Lower leg skin (tissue), 4 donors: ENCODE measurements at regions of chr15 and their contacts with region 1.

Region 1: DNA sequence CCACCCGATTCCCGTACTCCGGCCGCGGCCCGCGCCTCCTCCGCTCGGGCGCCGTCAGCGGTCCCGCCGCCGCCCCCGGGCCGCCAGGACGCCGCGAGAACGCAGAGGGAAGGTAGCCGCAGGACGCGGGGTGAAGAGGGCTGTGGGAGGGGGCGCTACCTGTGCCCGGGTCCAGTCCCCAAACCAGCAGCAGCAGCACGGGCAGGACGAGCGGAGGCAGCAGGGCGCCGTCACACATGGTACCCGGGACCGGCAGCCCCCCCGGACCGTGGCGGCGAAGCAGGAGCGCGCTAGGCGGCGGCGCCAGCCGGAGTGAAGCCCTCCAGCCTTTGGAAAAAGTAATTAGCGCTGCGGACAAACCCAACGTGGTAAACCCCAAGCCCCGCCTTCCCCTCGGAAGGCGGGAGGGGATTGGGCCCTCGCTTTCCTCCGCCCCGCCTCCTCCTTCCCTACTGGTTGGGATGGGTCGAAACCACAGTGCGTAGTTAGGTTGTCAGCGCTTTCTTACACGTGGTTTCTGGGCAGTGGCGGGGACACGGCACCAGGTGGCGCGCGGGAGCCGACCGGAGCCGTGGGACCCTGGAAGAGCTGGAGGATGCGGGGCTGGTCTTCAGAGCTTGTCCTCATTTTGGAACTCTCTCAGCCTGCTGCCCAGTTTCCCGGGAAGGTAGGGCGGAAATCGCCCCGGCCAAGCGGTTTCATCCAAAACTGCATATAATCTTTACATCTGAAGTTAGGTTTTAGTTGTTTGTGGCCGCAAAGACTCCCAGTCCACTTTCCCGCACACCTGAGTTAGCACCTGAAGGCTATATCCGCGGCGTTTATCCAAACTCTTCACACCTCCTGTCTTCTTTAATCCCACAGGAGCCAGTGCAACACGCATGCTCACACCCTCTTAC is at the start of gene ADAMTS17:
- DNase-seq: peak; percentile 97 to 99
- H3K4me3 ChIP-seq: peak within 1 kb of the TSS; percentile 55
- CTCF ChIP-seq: peak in 1 of 3 donors; percentile 86
- POLR2A ChIP-seq: no peak
- total RNA-seq, gene ADAMTS17: 3.5 to 7.8 (median 3.9) TPM

Region 2: DNA sequence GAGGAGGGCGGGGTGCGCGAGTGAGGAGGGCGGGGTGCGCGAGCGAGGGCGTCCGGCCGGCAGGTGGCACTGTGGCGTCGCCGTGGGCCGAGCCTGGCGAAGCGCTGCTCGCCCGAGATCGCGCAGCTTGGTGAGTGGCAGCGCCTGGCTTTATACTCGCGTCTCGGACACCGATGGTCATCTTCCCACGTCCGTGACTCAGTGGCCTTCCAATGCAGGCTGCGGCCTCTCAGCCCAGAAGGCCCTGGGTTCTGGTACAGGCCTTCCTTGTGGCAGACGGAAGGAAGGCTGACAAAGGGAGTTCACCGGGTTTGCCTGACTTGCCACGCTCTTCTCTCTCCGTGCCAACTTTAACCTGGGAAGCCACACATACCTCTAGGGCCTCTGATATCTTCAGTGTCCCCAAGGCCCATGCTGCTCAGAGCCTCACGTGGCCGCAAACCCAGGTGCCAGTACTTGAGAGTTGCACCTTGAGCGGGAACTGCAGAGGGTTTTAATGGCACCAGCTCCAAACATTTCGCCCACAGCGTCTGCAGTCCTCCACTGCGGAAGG is 413.4 kb before region 1 on chr15:
- intact Hi-C with region 1: loop called (anchors 2 kb)
- DNase-seq: peak; percentile 78 to 97
- H3K4me3 ChIP-seq: no peak overlapping the region
- CTCF ChIP-seq: no peak
- POLR2A ChIP-seq: no peak

Region 3: GRCh38 chr15:100201376-100202280 is 140.3 kb before region 1 on chr15:
- intact Hi-C with region 1: loop called (anchors 10 kb)
- DNase-seq: no peak
- H3K4me3 ChIP-seq: no peak overlapping the region
- CTCF ChIP-seq: no peak
- POLR2A ChIP-seq: no peak